ENCODE measurements at regions of chr15 and their contacts with region 1.

Region 1: DNA sequence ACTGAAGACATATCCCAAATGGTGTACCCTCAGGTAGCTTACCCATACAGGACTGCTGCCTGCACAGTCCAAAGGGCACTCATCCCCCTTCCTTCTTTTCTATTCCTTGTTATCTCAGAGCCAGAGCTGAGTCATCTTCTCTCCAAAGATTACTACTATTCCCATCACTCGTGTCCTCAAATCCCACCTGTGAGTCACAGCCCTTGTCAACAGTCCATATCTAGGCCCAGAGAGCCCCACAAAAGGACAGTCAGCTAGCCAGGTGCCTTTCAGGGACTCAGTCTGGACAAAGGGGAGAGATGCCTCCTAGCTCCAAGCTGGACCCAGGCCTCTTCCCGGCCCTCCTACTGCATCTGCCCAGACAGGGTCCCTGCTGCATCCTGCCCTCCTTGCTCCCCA is 11.0 kb downstream of the PARP16 start:
- DNase-seq: no peak
- ATAC-seq: peak in 3 of 4 donors; percentile 12 to 55 (median 30)
- H3K4me3 ChIP-seq: no peak overlapping the region
- H3K27ac ChIP-seq: no peak overlapping the region
- H3K4me1 ChIP-seq: no peaks in the 10 kb centered on the region
- H3K27me3 ChIP-seq: no peaks in the 10 kb centered on the region
- CTCF ChIP-seq: no peak

Region 2: GRCh38 chr15:64961013-64961412 is 314.7 kb before region 1 on chr15:
- intact Hi-C with region 1: no loop called
- DNase-seq: no peak
- ATAC-seq: no peak
- H3K4me3 ChIP-seq: no peak overlapping the region
- H3K27ac ChIP-seq: no peak overlapping the region
- H3K4me1 ChIP-seq: no peaks in the 10 kb centered on the region
- H3K27me3 ChIP-seq: no peaks in the 10 kb centered on the region
- CTCF ChIP-seq: no peak

Region 3: GRCh38 chr15:65054333-65055200 is 221.2 kb before region 1 on chr15:
- intact Hi-C with region 1: loop called in 1 of 3 experiments (anchors 10 kb)
- DNase-seq: peak in 5 of 6 donors; percentile 51 to 90 (median 79)
- ATAC-seq: peak; percentile 73 to 91 (median 87)
- H3K4me3 ChIP-seq: no peak overlapping the region
- H3K27ac ChIP-seq: no peak overlapping the region
- H3K4me1 ChIP-seq: no peaks in the 10 kb centered on the region
- H3K27me3 ChIP-seq: no peaks in the 10 kb centered on the region
- CTCF ChIP-seq: peak; percentile 76 to 81 (median 78)

Region 4: GRCh38 chr15:65130941-65131340 is 144.8 kb before region 1 on chr15:
- intact Hi-C with region 1: no loop called
- DNase-seq: no peak
- ATAC-seq: no peak
- H3K4me3 ChIP-seq: no peak overlapping the region
- H3K27ac ChIP-seq: no peak overlapping the region
- H3K4me1 ChIP-seq: peaks cover 4 to 16% (median 7%) of the 10 kb centered on the region in 3 donors
- H3K27me3 ChIP-seq: no peaks in the 10 kb centered on the region
- CTCF ChIP-seq: no peak

Region 5: DNA sequence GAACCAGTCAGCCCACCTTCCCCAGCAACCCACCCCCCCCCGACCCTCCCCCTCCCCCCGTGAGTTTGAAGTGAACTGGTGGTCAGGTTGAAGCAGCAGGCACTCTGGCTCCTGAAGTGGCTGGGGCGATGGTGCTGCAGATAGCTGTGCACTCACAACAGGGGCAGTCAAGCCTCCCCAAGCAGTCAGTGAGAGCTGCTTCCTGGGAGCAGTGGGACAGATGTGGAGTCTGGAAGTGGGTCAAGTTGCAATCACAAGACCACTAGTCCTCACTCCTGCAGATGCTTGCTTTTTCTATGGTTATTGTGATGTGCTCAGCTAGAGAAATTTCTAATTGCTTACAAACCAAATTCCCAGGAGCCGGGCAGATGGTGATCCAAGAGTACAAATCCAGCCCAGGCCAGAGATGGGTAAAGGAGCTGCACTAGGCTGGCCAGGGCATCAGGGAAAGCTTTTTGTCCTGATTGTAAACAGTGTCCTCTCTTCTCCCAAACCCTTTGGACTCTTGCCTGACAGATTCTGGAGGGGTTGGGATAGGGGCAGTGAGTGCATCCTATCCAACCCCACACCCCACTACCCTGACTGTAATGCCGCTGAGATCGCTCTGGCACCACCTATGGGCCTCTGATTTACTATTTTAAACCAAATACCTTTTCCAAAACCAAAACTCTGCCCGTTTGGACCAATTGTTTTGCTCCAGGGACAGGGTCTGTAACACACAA is 80.7 kb before region 1 on chr15:
- intact Hi-C with region 1: loop called in 1 of 3 experiments (anchors 5 kb)
- DNase-seq: no peak
- ATAC-seq: peak in 1 of 4 donors; percentile 14
- H3K4me3 ChIP-seq: no peak overlapping the region
- H3K27ac ChIP-seq: no peak overlapping the region
- H3K4me1 ChIP-seq: no peaks in the 10 kb centered on the region
- H3K27me3 ChIP-seq: no peaks in the 10 kb centered on the region
- CTCF ChIP-seq: no peak